ENCODE measurements at regions of chr6 and their contacts with region 1.

Region 1: DNA sequence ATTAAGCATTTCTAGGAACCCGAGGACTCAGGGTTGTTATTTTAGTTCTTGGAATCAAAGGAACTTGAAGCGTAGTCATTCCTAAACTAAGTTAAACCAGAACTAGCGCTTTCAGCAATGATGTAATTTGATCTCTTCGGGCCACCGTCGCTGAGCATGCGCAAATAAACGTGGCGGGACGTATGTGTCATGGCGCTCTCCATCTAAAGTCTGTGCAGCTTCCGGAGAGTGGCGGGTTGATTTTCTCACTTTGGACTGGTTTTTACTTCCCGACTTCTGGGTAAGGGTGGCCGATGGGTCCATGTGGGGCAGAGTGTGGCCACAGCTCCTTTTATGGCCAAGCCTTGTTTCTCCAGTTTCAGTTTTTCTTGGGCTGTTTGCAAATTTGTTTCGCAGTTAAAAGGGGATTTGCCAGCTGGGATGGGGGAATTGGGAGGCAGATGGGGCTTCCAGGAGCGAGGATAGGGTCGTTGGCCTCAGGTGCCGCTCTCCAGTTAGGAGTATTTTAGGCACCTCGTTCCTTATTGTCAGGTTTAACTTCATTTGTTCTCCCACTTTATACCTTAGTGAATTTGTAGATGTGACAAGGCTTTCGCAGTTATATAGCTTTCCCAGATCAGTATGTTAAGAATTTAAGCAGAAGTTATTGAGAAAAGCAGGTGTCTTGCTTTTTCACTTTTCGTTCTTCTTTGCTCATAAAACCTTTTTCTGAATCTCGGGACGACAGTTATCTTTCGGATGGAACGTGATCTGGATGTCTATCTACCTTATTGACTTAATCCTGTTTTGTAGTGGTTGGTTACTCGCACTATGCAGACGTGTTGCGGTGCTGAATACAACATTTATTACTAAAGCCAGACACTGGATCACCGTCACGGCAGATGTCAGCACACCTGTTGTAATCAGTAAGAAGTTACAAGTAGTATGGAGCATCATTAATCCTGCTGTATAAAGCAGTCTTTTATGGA is at the start of gene CDKAL1:
- DNase-seq: peak; percentile 83
- H3K4me3 ChIP-seq: peak within 1 kb of the TSS; percentile 96
- H3K27ac ChIP-seq: peak within 1 kb of the TSS; percentile 85
- H3K27me3 ChIP-seq: no peaks in the 10 kb centered on the region
- CTCF ChIP-seq: no peak
- polyA plus RNA-seq, gene CDKAL1: 6.8 and 9.2 TPM in 2 replicates

Region 2: GRCh38 chr6:20291764-20292580 is 242.6 kb before region 1 on chr6:
- CTCF ChIA-PET with region 1: interaction called, 30 read pairs
- POLR2A ChIA-PET with region 1: no interaction called
- DNase-seq: peak; percentile 68
- H3K4me3 ChIP-seq: no peak overlapping the region
- H3K27ac ChIP-seq: no peak overlapping the region
- H3K27me3 ChIP-seq: no peaks in the 10 kb centered on the region
- CTCF ChIP-seq: peak; percentile 92

Region 3: GRCh38 chr6:20487660-20488375 is 46.8 kb before region 1 on chr6:
- CTCF ChIA-PET with region 1: no interaction called
- POLR2A ChIA-PET with region 1: no interaction called
- DNase-seq: peak; percentile 45
- H3K4me3 ChIP-seq: no peak overlapping the region
- H3K27ac ChIP-seq: no peak overlapping the region
- H3K27me3 ChIP-seq: no peaks in the 10 kb centered on the region
- CTCF ChIP-seq: no peak

Region 4: GRCh38 chr6:20789162-20789561 is 254.6 kb after region 1 on chr6:
- CTCF ChIA-PET with region 1: no interaction called
- POLR2A ChIA-PET with region 1: no interaction called
- DNase-seq: peak; percentile 10
- H3K4me3 ChIP-seq: no peak overlapping the region
- H3K27ac ChIP-seq: no peak overlapping the region
- H3K27me3 ChIP-seq: no peaks in the 10 kb centered on the region
- CTCF ChIP-seq: peak; percentile 32; the same call in 1 of the 2 replicates